ENCODE measurements at regions of chr11 and their contacts with region 1.

Region 1: DNA sequence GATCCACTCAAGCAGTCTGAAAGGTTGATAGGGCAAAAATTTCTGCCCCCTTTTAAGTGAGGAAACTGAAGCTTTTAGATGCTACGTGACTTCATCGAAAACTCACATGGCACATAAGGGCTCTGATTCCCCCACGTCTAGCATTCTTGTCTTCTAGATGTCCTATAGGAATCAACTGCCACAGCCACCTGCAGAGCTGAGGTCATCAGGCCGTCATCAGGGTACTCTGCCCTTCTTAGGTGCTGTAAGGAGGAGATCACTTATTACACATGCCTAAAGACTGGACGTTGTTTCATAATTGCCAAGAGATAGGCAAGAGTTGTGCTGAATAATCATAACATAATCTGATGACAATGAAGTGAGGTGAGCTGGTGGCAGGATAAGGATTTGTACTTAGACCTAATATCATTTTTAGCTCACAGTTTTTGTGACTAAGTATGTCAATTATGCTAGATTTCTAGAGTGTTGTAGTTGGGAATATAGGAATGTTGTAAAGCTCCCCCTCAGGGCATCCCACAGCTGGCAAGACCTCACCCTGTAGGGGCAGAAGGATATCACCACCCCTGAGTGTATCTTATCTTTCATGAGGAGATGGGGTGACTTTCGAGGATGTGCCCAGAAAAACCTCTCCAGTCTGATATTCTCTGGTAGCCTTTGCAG is 349.4 kb downstream of the METTL15 start:
- DNase-seq: no peak
- ATAC-seq: no peak
- H3K4me3 ChIP-seq: no peak overlapping the region
- H3K4me3 Mint-ChIP-seq: no peak overlapping the region
- H3K27ac ChIP-seq: no peak overlapping the region
- H3K27ac Mint-ChIP-seq: no peak overlapping the region
- H3K4me1 ChIP-seq: no peaks in the 10 kb centered on the region
- H3K4me1 Mint-ChIP-seq: no peaks in the 10 kb centered on the region
- H3K27me3 ChIP-seq: no peaks in the 10 kb centered on the region
- H3K27me3 Mint-ChIP-seq: no peaks in the 10 kb centered on the region

Region 2: DNA sequence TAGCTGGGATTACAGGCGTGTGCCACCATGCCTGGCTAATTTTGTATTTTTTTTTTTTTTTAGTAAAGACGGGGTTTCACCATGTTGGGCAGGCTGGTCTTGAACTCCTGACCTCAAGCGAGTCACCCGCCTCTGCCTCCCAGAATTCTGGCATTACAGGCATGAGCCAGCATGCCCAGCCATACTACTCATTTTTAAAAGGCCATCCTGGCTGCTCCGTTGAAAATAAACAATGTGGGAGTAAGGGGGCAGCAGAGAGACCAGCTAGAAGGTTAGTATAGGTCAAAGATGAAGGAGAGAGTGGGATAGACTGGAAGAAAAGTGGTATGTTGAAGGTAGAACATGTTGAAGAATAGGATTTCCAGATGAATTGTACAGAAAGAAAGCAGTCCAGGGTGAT is 933.5 kb before region 1 on chr11:
- CTCF ChIA-PET with region 1: no interaction called
- POLR2A ChIA-PET with region 1: no interaction called
- DNase-seq: no peak
- ATAC-seq: no peak
- H3K4me3 ChIP-seq: no peak overlapping the region
- H3K4me3 Mint-ChIP-seq: no peak overlapping the region
- H3K27ac ChIP-seq: no peak overlapping the region
- H3K27ac Mint-ChIP-seq: no peak overlapping the region
- H3K4me1 ChIP-seq: no peaks in the 10 kb centered on the region
- H3K4me1 Mint-ChIP-seq: no peaks in the 10 kb centered on the region
- H3K27me3 ChIP-seq: no peaks in the 10 kb centered on the region
- H3K27me3 Mint-ChIP-seq: peaks cover 3 to 5% of the 10 kb centered on the region in 2 donors

Region 3: DNA sequence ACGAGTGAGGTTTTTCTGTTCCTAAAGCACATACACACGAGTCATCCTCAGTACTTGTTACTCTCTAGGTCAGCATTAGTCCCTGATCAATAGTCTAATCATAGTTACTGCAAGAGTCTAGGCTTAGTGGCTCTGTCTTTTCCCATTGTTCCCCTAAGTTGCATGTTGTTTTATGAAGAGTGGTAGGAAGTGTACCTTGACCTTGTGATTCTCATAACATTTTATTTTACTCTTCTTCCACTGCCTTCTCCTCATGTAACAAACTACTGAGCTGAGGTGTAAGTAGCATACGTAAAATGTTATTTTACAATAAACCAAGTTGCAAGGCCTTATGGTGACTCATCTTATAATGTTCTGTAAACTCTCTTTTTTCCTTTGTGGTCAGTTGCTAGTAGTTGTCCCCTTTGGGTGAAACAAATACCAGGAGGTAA is 334.4 kb before region 1 on chr11:
- CTCF ChIA-PET with region 1: interaction called in 1 of 2 experiments, 10 read pairs
- POLR2A ChIA-PET with region 1: no interaction called
- DNase-seq: no peak
- ATAC-seq: no peak
- H3K4me3 ChIP-seq: no peak overlapping the region
- H3K4me3 Mint-ChIP-seq: no peak overlapping the region
- H3K27ac ChIP-seq: no peak overlapping the region
- H3K27ac Mint-ChIP-seq: no peak overlapping the region
- H3K4me1 ChIP-seq: no peaks in the 10 kb centered on the region
- H3K4me1 Mint-ChIP-seq: peaks cover 18 to 21% (median 19%) of the 10 kb centered on the region in 3 donors
- H3K27me3 ChIP-seq: no peaks in the 10 kb centered on the region
- H3K27me3 Mint-ChIP-seq: no peaks in the 10 kb centered on the region

Region 4: DNA sequence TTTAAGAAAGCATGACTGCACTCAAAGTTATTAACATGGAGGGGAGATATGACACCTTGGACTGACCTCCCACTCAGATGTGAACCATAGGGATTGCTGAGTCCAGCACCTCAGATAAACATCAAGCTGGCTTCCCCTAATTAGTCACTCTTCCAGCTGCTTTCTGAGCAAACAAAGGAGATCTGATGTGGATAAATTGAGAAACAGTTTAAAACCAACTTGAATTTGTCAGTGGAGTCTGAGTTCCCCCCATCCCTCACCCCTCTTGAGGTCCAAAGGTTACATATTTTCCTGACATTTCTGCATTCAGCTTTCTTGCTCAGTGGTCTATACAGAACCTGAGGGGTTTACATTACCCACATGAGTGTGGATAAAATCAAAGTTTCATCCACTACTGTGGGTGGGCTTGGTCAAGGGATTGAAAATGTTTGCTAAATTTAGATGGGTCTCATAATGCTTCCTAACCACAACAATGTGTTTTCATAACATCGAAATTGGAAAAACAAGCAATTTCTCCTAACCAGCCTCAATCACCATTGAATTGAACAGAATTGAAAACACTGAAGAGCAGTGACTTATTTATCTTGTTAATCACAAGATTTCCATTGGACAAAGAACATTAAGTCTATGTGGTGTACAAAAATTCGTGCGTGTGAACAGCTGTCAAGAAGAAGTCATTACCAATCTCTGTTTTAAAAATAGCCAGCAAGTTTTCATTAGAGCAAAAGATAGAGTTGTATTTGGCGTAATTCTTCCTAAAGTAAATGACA is 57.1 kb before region 1 on chr11:
- CTCF ChIA-PET with region 1: no interaction called
- POLR2A ChIA-PET with region 1: no interaction called
- DNase-seq: no peak
- ATAC-seq: no peak
- H3K4me3 ChIP-seq: no peak overlapping the region
- H3K4me3 Mint-ChIP-seq: no peak overlapping the region
- H3K27ac ChIP-seq: no peak overlapping the region
- H3K27ac Mint-ChIP-seq: no peak overlapping the region
- H3K4me1 ChIP-seq: no peaks in the 10 kb centered on the region
- H3K4me1 Mint-ChIP-seq: no peaks in the 10 kb centered on the region
- H3K27me3 ChIP-seq: no peaks in the 10 kb centered on the region
- H3K27me3 Mint-ChIP-seq: no peaks in the 10 kb centered on the region

Measured in T-cell (primary cell).